A673 (cell line): ENCODE measurements at regions of chr6 and their contacts with region 1.

Region 1: GRCh38 chr6:26537846-26538571 is at the start of gene HMGN4:
- DNase-seq: peak; percentile 94
- H3K4me3 ChIP-seq: peak within 1 kb of the TSS; percentile 83
- H3K27ac ChIP-seq: peak within 1 kb of the TSS; percentile 86
- H3K4me1 ChIP-seq: peaks cover 32% of the 10 kb centered on the region
- H3K27me3 ChIP-seq: no peaks in the 10 kb centered on the region
- CTCF ChIP-seq: peak; percentile 22; the same call in 1 of the 2 replicates
- total RNA-seq, gene HMGN4: 55.9 and 58.6 TPM in 2 replicates

Region 2: DNA sequence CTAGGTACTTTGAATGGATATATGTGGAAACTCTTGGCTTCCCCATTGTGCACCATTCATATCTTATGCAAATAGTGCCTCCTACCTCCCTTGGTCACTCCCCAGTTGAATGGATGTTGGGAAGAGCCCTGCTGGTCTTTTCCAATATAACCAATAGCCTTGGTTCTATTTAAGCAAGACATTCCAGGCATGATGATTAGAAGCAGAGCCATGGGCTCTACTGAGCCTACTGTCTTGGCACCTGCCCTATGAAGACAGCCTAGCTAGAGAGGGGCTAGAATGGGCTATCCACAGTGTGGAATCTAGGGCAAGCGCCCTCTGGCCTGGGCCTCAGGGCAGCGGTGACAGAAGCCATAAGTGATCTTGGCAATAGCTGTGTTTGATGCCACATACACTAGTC is 721.8 kb before region 1 on chr6:
- CTCF ChIA-PET with region 1: no interaction called
- POLR2A ChIA-PET with region 1: no interaction called
- intact Hi-C with region 1: no loop called
- DNase-seq: no peak
- H3K4me3 ChIP-seq: no peak overlapping the region
- H3K27ac ChIP-seq: no peak overlapping the region
- H3K4me1 ChIP-seq: no peaks in the 10 kb centered on the region
- H3K27me3 ChIP-seq: peaks cover 4% of the 10 kb centered on the region
- CTCF ChIP-seq: no peak

Region 3: DNA sequence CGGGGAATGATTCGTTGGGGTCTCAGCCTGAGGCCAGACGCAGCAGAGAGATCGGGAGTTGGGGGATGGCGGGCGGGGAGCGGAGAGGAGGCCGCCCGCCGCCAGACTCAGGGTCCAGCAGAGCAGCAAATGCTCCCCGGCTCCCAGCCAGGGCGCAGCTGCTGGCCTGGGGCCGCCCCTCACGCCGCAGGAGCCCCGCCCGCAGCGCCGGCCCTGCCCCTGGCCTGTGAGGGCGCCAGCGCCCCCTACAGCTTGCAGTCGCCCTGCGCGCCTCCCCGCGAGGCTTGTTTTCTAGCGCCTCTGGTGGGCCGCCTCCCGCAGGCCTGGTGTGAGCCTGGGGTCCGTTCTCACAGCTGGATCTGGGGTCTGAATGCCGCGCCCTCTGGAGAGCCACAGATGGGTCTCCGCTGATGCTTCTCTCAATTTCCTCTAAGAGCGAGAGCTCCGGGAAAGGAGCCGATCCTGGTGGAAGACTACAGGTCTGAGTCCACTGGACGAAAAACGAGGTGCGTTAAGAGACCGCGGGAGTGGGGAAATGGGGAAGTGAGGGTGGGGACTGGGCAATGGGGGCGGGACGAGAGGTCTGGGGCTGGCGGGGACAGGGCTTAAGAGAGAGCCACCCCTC is 545.5 kb before region 1 on chr6:
- CTCF ChIA-PET with region 1: no interaction called
- POLR2A ChIA-PET with region 1: no interaction called
- intact Hi-C with region 1: no loop called
- DNase-seq: peak; percentile 94
- H3K4me3 ChIP-seq: peak overlapping the region; percentile 77
- H3K27ac ChIP-seq: peak overlapping the region; percentile 89
- H3K4me1 ChIP-seq: peaks cover 2% of the 10 kb centered on the region
- H3K27me3 ChIP-seq: no peaks in the 10 kb centered on the region
- CTCF ChIP-seq: peak; percentile 95

Region 4: DNA sequence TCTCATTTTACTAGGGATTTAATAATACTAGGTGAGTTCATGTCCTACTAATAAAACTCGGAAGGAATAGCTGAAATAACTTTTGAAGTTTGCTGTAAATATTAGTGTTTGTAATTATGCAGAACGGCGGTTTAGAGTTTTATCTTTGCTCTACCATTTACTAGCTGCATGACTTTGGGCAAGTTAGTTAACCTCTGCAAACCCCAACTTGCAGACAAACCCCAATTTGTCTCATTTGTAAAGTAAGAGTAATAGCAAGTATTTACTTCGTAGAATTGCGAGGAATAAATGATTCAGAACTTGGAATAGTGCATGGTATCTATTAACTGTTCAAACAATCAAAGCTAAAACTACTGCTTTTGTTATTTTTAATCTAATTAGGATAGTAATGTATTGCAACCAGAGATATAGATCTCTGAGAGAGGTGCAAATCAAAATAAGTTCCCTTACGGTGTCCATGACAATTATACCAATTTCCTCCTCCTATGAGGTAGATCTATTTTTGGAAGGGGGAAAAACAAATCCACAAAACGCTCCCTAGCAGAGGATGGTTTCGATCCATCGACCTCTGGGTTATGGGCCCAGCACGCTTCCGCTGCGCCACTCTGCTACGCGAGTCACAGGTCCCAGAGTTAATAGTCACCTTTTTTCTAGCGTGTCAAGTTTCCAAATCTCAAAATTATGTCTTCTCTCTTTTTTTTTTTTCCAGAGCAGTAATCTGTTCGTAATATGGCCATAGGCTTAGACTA is 208.1 kb before region 1 on chr6:
- CTCF ChIA-PET with region 1: no interaction called
- POLR2A ChIA-PET with region 1: interaction called, 6 read pairs
- intact Hi-C with region 1: loop called (anchors 5 kb)
- DNase-seq: peak; percentile 79
- H3K4me3 ChIP-seq: peak overlapping the region; percentile 61
- H3K27ac ChIP-seq: no peak overlapping the region
- H3K4me1 ChIP-seq: no peaks in the 10 kb centered on the region
- H3K27me3 ChIP-seq: no peaks in the 10 kb centered on the region
- CTCF ChIP-seq: no peak

Region 5: GRCh38 chr6:26355366-26355765 is 182.6 kb before region 1 on chr6:
- CTCF ChIA-PET with region 1: no interaction called
- POLR2A ChIA-PET with region 1: no interaction called
- intact Hi-C with region 1: no loop called
- DNase-seq: no peak
- H3K4me3 ChIP-seq: no peak overlapping the region
- H3K27ac ChIP-seq: no peak overlapping the region
- H3K4me1 ChIP-seq: no peaks in the 10 kb centered on the region
- H3K27me3 ChIP-seq: no peaks in the 10 kb centered on the region
- CTCF ChIP-seq: no peak